Calu3 (cell line): ENCODE measurements at regions of chr11 and their contacts with region 1.

Region 1: GRCh38 chr11:30960387-30960992 is 374.3 kb upstream of the MPPED2 start:
- DNase-seq: peak; percentile 10
- H3K4me3 Mint-ChIP-seq: no peak overlapping the region
- H3K27ac Mint-ChIP-seq: no peak overlapping the region
- H3K4me1 Mint-ChIP-seq: no peaks in the 10 kb centered on the region
- H3K27me3 Mint-ChIP-seq: peaks cover 32% of the 10 kb centered on the region
- CTCF ChIP-seq: peak; percentile 56

Region 2: GRCh38 chr11:31045335-31045734 is 84.8 kb after region 1 on chr11:
- CTCF ChIA-PET with region 1: interaction called, 15 read pairs
- intact Hi-C with region 1: loop called (anchors 1 kb)
- DNase-seq: no peak
- H3K4me3 Mint-ChIP-seq: no peak overlapping the region
- H3K27ac Mint-ChIP-seq: no peak overlapping the region
- H3K4me1 Mint-ChIP-seq: no peaks in the 10 kb centered on the region
- H3K27me3 Mint-ChIP-seq: no peaks in the 10 kb centered on the region
- CTCF ChIP-seq: no peak

Region 3: DNA sequence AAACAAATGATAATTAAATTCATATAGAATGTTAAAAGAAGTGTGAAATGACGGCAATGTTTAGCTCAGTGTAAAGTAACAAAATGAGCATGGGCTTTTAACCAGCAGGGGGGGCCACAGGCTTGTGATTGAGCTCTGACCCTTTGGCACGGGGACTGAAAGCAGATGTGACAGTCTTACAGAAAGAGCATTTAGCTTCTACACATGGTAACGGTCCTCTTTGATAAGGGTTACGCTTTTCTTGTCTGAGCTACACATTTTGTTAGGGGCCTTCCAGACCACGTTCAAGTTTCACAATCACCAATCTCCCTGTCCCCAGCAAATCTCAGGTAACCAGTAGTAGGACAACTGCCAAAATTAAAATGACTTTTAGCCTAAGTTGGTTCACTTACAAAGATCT is 146.6 kb after region 1 on chr11:
- CTCF ChIA-PET with region 1: interaction called, 4 read pairs
- intact Hi-C with region 1: loop called (anchors 2 kb)
- DNase-seq: peak; percentile 73
- H3K4me3 Mint-ChIP-seq: no peak overlapping the region
- H3K27ac Mint-ChIP-seq: no peak overlapping the region
- H3K4me1 Mint-ChIP-seq: no peaks in the 10 kb centered on the region
- H3K27me3 Mint-ChIP-seq: no peaks in the 10 kb centered on the region
- CTCF ChIP-seq: peak; percentile 78

Region 4: DNA sequence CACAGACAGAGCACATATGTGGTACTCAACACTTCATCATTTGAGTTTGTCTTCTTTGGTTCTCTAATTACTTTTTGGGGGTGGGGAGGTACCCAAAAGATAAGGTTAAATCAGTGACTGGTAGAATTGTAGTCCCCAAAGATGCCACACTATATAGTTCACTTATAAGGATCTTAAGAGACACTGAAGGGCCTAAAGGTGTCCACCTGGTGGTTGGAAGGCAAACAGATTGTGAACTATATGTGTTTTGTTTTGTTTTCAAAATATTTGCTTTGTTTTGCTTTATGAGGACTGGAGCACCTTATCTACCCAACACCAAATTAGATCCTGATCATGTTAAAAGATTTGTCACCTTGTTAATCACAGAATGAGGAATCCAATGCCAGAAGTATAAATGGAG is 272.9 kb after region 1 on chr11:
- CTCF ChIA-PET with region 1: interaction called, 3 read pairs
- intact Hi-C with region 1: loop called (anchors 1 kb)
- DNase-seq: no peak
- H3K4me3 Mint-ChIP-seq: no peak overlapping the region
- H3K27ac Mint-ChIP-seq: no peak overlapping the region
- H3K4me1 Mint-ChIP-seq: no peaks in the 10 kb centered on the region
- H3K27me3 Mint-ChIP-seq: no peaks in the 10 kb centered on the region
- CTCF ChIP-seq: peak; percentile 41

Region 5: DNA sequence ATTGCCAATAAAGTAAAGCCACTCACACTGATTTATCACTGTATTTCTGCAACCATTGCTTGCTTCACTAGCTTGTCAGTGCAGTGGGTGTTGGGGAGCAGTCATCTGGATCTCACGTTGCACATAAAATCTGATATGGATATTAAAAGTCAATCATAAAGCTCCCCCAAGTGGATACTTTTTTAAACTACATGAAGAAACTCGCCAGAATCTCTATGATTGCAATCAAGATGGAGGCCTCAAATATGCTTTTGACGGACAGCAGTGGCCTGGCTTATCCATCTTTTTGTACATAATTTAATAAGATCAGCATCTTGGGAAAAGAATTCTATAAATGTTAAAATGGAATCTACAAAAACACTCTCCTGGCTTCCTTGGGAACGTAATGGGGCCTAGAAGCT is 1337.1 kb after region 1 on chr11:
- CTCF ChIA-PET with region 1: no interaction called
- intact Hi-C with region 1: loop called (anchors 5 kb)
- DNase-seq: peak; percentile 2
- H3K4me3 Mint-ChIP-seq: no peak overlapping the region
- H3K27ac Mint-ChIP-seq: no peak overlapping the region
- H3K4me1 Mint-ChIP-seq: no peaks in the 10 kb centered on the region
- H3K27me3 Mint-ChIP-seq: peaks cover 63% of the 10 kb centered on the region
- CTCF ChIP-seq: peak; percentile 27